Mammary epithelial cell (primary cell): ENCODE measurements at regions of chr10 and their contacts with region 1.

Region 1: GRCh38 chr10:3467052-3467951 is 294.7 kb upstream of the PITRM1 start:
- DNase-seq: peak; percentile 97
- H3K4me3 ChIP-seq: peak overlapping the region in 2 of 3 experiments; percentile 14 to 27
- H3K27ac ChIP-seq: peak overlapping the region; percentile 100
- H3K4me1 ChIP-seq: peaks cover 35% of the 10 kb centered on the region
- H3K27me3 ChIP-seq: no peaks in the 10 kb centered on the region
- CTCF ChIP-seq: peak; percentile 17 to 54

Region 2: GRCh38 chr10:3248888-3249758 is 218.2 kb before region 1 on chr10:
- CTCF ChIA-PET with region 1: no interaction called
- dilution Hi-C with region 1: no loop called
- in situ Hi-C with region 1: no loop called
- intact Hi-C with region 1: loop called (anchors 5 kb)
- DNase-seq: peak; percentile 94
- H3K4me3 ChIP-seq: no peak overlapping the region
- H3K27ac ChIP-seq: peak overlapping the region; percentile 56
- H3K4me1 ChIP-seq: peaks cover 5% of the 10 kb centered on the region
- H3K27me3 ChIP-seq: no peaks in the 10 kb centered on the region
- CTCF ChIP-seq: no peak

Region 3: GRCh38 chr10:3500408-3500856 is 33.1 kb after region 1 on chr10:
- CTCF ChIA-PET with region 1: no interaction called
- dilution Hi-C with region 1: no loop called
- in situ Hi-C with region 1: no loop called
- intact Hi-C with region 1: loop called (anchors 2 kb)
- DNase-seq: peak; percentile 60
- H3K4me3 ChIP-seq: no peak overlapping the region
- H3K27ac ChIP-seq: peak overlapping the region; percentile 39
- H3K4me1 ChIP-seq: peaks cover 6% of the 10 kb centered on the region
- H3K27me3 ChIP-seq: no peaks in the 10 kb centered on the region
- CTCF ChIP-seq: no peak

Region 4: DNA sequence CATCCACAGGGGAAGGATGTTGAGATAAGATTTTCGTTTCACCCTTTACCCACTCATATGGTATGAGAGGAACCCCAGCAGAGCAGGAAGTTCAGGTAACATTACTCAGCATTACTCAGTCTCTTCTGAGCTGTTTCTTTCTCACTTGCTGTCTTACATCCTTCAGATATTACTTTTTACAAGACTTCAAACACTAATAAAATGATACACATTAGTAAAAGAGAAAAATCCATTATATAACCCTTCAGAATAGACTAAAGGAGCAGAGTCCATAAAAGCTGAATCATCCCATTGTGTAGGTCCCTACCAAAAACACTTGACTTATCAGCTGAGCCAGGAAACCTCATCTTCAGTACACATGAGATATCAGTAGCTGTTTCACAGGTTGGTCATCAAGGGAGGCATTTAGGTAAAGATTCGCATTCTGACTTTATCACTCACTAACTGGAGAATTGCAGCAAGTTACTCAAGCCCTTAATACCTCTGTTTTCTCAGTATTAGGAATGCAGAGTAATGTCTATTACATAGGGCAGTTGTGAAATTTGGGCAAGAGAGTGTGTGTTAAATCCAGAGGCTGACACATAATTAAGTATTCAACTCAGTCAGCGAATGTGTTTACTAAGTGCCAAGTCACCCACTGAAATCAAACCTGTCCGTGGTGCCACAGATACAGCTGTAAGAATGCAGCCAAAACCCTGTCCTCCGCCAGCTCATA is 273.0 kb after region 1 on chr10:
- CTCF ChIA-PET with region 1: no interaction called
- dilution Hi-C with region 1: no loop called
- in situ Hi-C with region 1: no loop called
- intact Hi-C with region 1: loop called (anchors 1 kb)
- DNase-seq: peak; percentile 95
- H3K4me3 ChIP-seq: no peak overlapping the region
- H3K27ac ChIP-seq: peak overlapping the region; percentile 81
- H3K4me1 ChIP-seq: peaks cover 22% of the 10 kb centered on the region
- H3K27me3 ChIP-seq: no peaks in the 10 kb centered on the region
- CTCF ChIP-seq: no peak

Region 5: DNA sequence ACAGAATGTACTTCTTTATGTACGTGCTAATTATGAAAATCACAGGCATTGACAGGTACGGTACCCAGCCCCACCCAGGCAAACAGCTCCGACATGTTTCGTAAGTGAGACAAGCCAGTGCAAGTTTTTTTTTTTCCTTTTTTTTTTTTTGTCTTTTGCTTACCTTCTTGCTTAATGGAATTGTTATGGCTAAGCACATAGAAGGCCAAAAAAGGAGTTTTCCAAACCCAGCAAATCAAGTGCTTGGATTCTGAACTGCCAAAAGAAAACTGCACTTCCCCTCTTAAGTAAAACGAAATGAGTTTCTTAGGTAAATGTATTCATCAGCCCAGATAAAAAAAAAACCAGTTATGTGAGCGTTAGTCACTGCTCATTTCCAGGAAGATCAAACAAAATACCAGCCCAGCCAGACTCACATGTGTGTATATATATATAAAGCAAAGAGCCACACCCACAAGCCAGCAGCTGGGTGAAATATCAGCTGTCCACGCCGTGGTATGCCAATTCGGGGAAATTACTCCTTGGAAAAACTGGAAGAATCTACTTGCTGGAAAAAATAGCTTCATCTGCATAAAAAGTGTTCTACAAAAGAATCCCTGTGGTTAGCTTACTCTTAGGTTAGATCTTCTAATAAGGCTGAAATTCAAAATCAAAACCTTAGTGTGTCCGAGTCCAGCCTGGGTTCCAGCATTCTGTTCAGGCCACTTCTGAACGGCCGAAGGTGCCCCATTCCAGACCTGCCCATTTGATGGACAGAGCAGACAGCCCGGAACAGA is 309.7 kb after region 1 on chr10:
- CTCF ChIA-PET with region 1: no interaction called
- dilution Hi-C with region 1: no loop called
- in situ Hi-C with region 1: no loop called
- intact Hi-C with region 1: loop called (anchors 2 kb)
- DNase-seq: peak; percentile 83
- H3K4me3 ChIP-seq: no peak overlapping the region
- H3K27ac ChIP-seq: peak overlapping the region; percentile 69
- H3K4me1 ChIP-seq: peaks cover 49% of the 10 kb centered on the region
- H3K27me3 ChIP-seq: no peaks in the 10 kb centered on the region
- CTCF ChIP-seq: no peak